A549 (cell line): ENCODE measurements at regions of chr10 and their contacts with region 1.

Region 1: DNA sequence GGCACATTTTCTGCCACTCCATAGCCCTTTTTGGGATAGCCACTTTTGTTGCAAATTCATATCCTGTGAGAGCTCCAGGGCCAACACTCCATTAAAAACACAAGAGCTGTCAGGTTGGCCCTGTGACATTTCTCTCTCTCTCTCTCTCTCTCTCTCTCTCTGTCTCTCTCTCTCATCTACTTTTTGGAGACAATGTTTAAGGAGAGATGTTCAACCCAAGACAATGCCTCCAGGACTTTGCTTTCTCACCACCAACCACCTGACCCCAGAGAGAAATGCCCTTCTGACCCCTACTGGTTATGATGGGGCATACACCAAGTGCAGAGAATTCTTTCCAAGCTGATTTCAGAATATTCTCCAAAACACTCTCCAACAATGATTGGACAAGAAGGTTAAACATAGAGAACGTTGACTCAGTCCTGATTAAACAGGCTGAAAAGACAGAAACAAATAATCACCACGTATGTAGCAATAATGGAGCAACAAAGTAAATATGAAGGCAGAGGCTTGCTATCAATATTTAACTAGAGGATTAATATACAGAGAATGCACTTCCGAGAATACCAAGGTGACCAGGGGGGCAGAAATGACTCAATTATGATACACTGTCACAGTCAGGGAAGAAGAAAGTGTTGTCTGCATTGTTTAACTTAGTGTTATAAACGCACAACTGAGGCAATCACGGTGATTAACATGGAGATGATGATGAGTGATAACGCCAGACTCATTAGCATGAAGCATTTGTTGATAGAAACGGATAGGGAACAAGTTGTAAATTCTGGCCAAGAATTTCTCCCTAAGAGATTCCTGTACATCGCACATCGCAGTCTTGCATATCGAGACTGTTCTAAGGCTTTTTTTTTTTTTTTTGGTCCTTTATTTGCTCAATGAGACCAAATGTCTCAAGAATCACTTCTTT is 178.5 kb downstream of the NRP1 start:
- DNase-seq: peak; percentile 89 to 98
- ATAC-seq: peak; percentile 95
- H3K4me3 ChIP-seq: no peak overlapping the region; the same call in 2 of the 3 replicates
- H3K27ac ChIP-seq: peak overlapping the region; percentile 87 to 89
- H3K4me1 ChIP-seq: peaks cover 27% of the 10 kb centered on the region
- CTCF ChIP-seq: peak; percentile 94
- EP300 ChIP-seq: peak; percentile 100
- POLR2A ChIP-seq: no peak
- RAD21 ChIP-seq: peak; percentile 98 to 99

Region 2: DNA sequence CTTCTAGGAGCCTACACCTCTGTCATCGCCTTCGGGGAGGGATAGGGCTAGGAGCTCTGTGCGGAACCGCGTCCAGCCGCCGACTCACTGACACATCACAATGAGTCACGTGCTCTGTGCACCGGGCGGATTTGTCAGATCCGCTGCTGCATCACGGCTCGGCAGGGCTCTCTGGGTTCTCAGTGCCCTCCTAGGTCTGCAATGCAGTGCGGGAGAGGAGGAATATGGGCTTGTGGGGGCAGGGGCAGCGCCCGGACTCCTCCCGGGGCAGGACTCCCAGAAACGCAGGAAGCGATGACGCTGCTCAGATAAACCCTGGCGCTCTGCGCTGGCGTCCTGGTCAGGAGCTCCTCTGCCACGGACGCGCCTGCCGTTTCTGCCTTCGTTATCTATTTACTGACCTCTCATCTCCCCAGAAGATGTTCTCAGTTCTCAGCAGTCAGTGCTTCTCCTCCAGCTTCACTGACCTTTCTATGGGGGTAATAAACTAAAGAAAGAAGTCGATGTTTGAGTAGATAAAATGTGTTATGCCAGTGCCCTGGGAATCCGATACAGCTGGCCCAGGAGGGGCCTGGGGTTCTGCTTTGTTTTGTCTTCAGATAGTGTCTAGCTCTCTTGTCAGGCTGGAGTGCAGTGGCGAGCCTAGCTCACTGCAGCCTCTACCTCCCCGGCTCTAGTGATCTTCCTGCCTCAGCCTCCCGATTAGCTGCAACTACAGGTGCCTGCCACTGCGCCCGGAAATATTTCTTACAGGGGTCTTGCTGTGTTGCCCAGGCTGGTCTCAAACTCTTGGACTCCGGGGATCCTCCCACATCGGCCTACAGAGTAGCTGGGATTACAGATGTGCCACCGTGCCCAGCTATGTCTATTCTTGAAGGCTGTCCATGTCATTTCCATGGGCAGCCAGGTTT is 175.2 kb before region 1 on chr10:
- CTCF ChIA-PET with region 1: interaction called, 7 read pairs
- POLR2A ChIA-PET with region 1: interaction called, 15 read pairs
- DNase-seq: peak; percentile 72 to 100
- ATAC-seq: peak; percentile 87 to 91
- H3K4me3 ChIP-seq: peak overlapping the region; percentile 40
- H3K27ac ChIP-seq: peak overlapping the region; percentile 96 to 99
- H3K4me1 ChIP-seq: peaks cover 70% of the 10 kb centered on the region
- CTCF ChIP-seq: no peak
- EP300 ChIP-seq: peak; percentile 83 to 93; a peak in 3 of 5 replicates
- POLR2A ChIP-seq: peak; percentile 62
- RAD21 ChIP-seq: peak; percentile 39 to 57; a peak in 3 of 5 replicates

Region 3: GRCh38 chr10:33032654-33033151 is 123.3 kb before region 1 on chr10:
- CTCF ChIA-PET with region 1: interaction called, 15 read pairs
- POLR2A ChIA-PET with region 1: no interaction called
- DNase-seq: peak; percentile 44 to 75
- ATAC-seq: peak; percentile 65 to 84; a peak in 5 of 6 replicates
- H3K4me3 ChIP-seq: 0 out of 3 replicates have a peak overlapping the region, but pooled peaks have one; percentile 5
- H3K27ac ChIP-seq: peak overlapping the region; percentile 74 to 89
- H3K4me1 ChIP-seq: peaks cover 24% of the 10 kb centered on the region
- CTCF ChIP-seq: no peak; the same call in 2 of the 3 replicates
- EP300 ChIP-seq: peak in 1 of 2 experiments; percentile 70; a peak in 1 of 5 replicates
- POLR2A ChIP-seq: no peak
- RAD21 ChIP-seq: peak in 1 of 2 experiments; percentile 27; a peak in 2 of 5 replicates

Region 4: GRCh38 chr10:33125522-33126517 is 30.2 kb before region 1 on chr10:
- CTCF ChIA-PET with region 1: interaction called, 20 read pairs
- POLR2A ChIA-PET with region 1: no interaction called
- DNase-seq: no peak
- ATAC-seq: no peak
- H3K4me3 ChIP-seq: no peak overlapping the region
- H3K27ac ChIP-seq: peak overlapping the region; percentile 51 to 95; a peak in 5 of 6 replicates
- H3K4me1 ChIP-seq: peaks cover 48% of the 10 kb centered on the region
- CTCF ChIP-seq: no peak
- EP300 ChIP-seq: no peak
- POLR2A ChIP-seq: no peak
- RAD21 ChIP-seq: no peak

Region 5: DNA sequence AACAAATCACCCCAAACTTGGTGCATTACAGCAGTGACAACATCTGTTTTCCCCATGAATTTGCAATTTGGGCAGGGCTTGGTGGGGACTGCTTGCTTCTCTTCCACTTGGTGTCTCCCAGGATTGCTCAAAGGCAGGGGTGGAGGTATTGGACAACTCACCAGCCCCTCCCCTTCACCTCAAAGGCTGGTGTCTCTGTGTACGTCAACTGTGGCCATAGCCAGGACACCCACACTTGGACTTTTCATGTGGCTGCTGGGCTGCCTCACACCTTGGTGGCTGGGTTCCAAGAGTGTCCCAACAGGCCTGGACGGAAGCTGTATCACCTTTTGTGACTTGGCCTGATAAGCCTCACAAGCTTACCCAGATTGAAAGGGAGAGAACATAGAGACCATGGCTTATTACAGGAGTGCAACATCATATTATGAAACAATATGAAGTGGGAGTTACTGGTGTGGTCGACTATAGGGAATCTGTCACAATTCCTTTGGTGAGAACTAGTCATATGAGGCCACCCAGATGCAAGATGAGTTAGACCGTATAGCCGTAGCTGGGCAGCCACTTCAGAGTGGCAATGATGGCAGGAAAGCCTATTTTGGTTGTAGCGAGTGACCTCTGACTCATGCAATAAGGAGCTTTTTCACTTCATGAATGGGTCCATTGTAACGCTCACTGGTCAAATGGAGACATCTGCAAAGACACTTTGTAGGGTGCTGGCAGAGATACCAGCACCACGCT is 10.4 kb before region 1 on chr10:
- CTCF ChIA-PET with region 1: interaction called, 107 read pairs
- POLR2A ChIA-PET with region 1: no interaction called
- DNase-seq: no peak
- ATAC-seq: no peak
- H3K4me3 ChIP-seq: no peak overlapping the region
- H3K27ac ChIP-seq: peak overlapping the region; percentile 34 to 95; a peak in 4 of 6 replicates
- H3K4me1 ChIP-seq: peaks cover 14% of the 10 kb centered on the region
- CTCF ChIP-seq: no peak
- EP300 ChIP-seq: no peak
- POLR2A ChIP-seq: no peak
- RAD21 ChIP-seq: no peak

Region 6: GRCh38 chr10:33314811-33315561 is 159.0 kb after region 1 on chr10:
- CTCF ChIA-PET with region 1: no interaction called
- POLR2A ChIA-PET with region 1: no interaction called
- DNase-seq: no peak
- ATAC-seq: no peak
- H3K4me3 ChIP-seq: no peak overlapping the region
- H3K27ac ChIP-seq: peak overlapping the region; percentile 40 to 62; a peak in 4 of 6 replicates
- H3K4me1 ChIP-seq: peaks cover 57% of the 10 kb centered on the region
- CTCF ChIP-seq: no peak
- EP300 ChIP-seq: no peak
- POLR2A ChIP-seq: no peak
- RAD21 ChIP-seq: no peak